ENCODE measurements at regions of chr15 and their contacts with region 1.

Region 1: DNA sequence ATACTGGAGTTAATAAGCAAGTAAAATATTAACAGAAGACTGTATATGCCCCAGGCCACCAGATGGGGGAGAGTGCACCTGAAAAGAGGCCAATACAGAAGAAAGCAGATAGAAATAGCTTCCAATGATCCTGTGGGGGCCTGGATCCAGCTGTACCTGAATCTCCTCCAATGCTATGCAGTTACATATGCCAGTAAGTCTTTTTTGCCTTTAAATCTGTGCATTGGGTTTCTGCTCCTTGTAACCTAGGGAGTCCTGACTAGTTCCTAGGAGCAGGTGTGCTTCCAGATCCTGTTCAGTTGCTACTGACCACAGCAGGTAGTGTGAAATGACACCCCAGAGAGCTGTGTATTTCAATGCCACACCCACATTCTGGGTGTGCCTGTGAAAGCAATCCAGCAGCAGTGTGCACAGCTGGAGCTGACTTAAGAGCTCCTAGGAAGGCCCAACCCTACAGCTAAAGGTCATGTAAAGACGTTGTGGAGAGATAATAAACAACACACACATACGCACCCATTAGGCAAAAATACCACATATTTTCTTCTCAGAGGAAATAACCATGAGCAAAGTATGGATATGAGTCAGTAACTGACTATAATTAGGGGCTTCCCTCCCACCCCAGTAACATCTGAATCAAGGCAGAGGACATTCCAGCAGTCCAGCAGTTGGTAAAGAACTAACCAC is 62.2 kb upstream of the AKAP13 start:
- DNase-seq: peak; percentile 35
- ATAC-seq: peak; percentile 59
- H3K4me3 Mint-ChIP-seq: no peak overlapping the region
- H3K27ac Mint-ChIP-seq: peak overlapping the region; percentile 68
- H3K4me1 Mint-ChIP-seq: peaks cover 43% of the 10 kb centered on the region
- H3K27me3 Mint-ChIP-seq: no peaks in the 10 kb centered on the region

Region 2: GRCh38 chr15:85380217-85380811 is 62.1 kb after region 1 on chr15 and contains the start of gene AKAP13:
- CTCF ChIA-PET with region 1: interaction called, 10 read pairs
- POLR2A ChIA-PET with region 1: interaction called, 11 read pairs
- DNase-seq: peak; percentile 98
- ATAC-seq: peak; percentile 88
- H3K4me3 Mint-ChIP-seq: peak within 1 kb of the TSS; percentile 86
- H3K27ac Mint-ChIP-seq: peak within 1 kb of the TSS; percentile 91
- H3K4me1 Mint-ChIP-seq: peaks cover 47% of the 10 kb centered on the region
- H3K27me3 Mint-ChIP-seq: peaks cover 13% of the 10 kb centered on the region
- total RNA-seq, gene AKAP13: 112 to 117 TPM

Measured in activated CD8-positive, alpha-beta T cell treated with anti-CD3 and anti-CD28 coated beads, Interleukin-2, amount 10 ng/mL, durations not matched to agents 7 days and 5 days (primary cell).